ENCODE measurements at regions of chr10 and their contacts with region 1.

Region 1: DNA sequence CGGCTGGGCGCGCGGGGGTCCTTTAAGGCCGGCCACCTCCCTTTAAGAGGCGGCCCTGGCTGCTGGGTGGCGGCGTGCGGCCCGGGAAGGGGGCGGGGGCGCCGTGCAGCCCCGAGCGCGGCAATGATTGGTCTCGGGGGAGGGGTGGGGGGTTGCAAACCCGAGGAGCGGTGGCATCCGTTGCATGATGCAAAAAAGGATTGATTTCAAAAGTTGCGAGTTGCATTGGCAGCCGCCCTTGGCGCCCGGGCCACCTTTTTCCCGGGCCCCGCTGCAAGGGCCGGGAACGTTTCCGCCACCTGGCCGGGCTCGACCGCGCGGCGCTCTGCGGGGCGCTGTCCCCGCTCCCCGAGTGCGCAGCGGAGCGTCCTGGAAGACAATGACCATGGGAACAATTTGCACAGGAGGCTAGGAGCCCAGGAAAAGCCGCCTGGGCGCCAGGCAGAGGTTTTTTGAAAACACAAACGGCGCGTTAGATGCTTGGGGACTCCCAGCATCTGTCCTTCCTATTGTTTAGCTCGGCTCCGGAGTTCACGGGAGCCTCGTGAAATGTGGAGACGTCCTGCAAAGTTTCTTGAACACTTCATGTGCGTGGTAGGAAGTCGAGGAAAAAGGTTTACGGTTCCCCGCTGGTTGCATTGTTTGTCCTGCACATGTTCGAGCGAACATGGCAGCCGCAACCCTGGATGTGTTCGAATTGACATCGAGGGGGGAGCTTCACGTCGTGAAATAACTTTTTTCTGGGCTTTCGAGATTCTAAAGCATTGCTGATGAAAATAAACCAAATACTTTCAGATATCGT is at the start of gene SEPHS1:
- DNase-seq: peak; percentile 87
- total RNA-seq, gene SEPHS1: 30.4 TPM

Region 2: DNA sequence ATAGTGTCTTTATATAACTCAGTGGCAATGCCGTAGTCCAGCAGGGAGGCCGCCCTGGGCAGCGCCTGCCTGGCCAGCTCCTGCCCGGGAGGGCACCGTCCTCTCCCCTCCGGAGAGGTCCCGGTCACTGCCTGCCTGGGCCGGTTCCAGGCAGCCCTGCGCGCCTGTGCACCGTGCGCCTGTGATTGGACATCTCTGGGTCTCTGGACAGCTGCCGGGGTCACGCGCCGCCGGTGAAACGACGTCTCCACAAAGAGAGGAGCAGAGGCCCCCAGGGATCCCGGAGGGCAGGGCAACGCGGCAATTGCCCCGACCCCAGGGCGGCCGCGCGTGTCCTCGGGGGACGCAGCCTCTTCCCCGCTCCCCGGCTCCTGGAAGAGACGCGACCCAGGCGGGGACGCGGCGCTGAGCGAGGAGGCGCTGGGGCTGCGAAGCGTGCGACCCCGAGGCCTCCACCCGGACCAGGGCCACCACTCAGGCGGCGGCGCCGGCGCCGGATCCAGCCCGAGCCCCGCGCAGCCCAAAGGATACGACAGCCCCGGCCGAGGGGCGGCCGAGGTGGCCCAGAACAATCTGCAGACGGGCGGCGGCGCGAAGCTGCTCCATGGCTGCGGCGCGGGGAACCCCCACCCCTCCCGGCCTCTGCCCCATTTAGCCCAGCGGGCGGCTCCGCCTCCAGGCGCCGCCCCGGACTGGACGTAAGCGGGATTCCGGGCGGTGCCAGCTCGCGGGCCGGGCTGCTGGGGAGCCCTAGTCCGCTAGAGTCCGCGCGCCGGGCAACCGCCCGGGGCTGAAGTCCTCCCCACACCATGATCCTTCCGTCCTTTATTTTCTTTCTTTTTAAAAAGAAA is 48.8 kb before region 1 on chr10 and contains the start of gene PHYH:
- intact Hi-C with region 1: loop called (anchors 2 kb)
- DNase-seq: peak; percentile 95
- total RNA-seq, gene PHYH: 101 TPM

Region 3: GRCh38 chr10:13492493-13493175 is 144.2 kb after region 1 on chr10:
- intact Hi-C with region 1: no loop called
- DNase-seq: no peak

Region 4: GRCh38 chr10:13528875-13529713 is 180.7 kb after region 1 on chr10 and contains the start of gene BEND7:
- intact Hi-C with region 1: loop called (anchors 10 kb)
- DNase-seq: no peak
- total RNA-seq, gene BEND7: 14.0 TPM

Measured in cardiac septum (tissue), 1 donor.